ENCODE measurements at regions of chr6 and their contacts with region 1.

Region 1: DNA sequence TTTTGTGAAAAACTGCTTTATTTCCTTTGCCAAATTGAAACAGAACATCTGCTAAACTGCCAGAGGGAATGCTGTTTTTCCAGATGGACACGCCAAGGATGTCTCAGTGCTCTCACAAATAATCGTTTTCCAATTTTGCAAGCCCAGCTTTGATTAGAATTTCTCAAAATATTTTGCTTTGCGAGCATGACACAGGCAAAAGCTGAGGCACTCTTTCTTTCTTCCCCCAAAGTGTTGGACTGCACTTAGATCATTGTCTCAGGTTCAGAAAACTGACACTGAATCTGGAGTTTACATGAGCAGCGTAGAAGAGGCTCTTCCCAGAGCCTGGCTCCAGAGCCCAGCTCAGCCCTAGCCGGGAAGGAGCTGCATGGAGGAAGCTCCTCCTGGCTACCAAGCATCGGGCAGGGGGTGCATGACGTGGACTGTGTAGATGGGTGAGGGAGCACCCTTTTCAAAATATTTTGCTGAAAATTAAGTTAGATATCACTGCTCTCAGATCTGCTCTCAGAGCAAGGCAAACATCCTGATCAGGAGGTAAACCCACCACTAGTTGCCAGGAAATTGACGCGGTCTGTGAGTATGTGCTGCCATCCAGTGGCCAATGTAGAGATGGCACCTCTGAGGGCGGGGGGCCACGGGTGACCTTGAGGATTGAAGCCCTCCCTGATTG is 107.5 kb downstream of the SLC22A3 start:
- DNase-seq: peak; percentile 70
- ATAC-seq: peak; percentile 84

Region 2: DNA sequence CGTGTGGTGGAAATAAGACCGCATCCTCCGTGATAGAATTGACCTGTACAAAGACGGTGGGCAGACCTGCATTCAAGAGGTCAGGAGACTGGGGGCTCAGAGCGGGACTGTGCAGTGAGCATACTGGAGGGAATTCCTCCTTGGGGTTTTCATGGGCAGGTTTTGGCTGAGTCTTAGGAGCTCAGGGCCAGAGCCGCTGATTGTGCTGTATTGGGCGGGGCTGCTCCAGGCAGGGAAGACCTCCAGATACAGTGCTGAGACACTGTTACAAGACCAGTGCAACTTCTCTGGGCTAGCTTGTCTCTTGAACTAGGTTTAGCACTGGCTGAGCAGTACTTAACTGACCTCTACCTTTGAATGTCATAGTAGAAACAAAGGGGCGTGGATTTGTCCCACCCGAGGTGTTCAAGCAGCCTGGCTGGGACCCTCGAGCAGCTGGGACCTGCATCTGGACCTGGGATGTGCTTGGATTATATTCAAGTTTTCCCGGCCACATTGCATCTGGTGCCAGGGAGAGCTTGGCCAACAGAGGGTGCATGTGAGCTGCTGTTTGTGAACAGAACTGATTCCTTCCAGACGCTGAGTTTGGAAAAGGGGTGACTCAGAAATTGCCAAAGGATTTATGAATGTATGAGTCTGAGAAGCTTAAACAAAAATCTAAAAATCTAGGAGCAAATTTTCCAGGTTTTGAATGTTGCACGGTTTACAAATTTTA is 367.5 kb before region 1 on chr6:
- intact Hi-C with region 1: loop called (anchors 2 kb)
- DNase-seq: no peak
- ATAC-seq: peak; percentile 81

Region 3: DNA sequence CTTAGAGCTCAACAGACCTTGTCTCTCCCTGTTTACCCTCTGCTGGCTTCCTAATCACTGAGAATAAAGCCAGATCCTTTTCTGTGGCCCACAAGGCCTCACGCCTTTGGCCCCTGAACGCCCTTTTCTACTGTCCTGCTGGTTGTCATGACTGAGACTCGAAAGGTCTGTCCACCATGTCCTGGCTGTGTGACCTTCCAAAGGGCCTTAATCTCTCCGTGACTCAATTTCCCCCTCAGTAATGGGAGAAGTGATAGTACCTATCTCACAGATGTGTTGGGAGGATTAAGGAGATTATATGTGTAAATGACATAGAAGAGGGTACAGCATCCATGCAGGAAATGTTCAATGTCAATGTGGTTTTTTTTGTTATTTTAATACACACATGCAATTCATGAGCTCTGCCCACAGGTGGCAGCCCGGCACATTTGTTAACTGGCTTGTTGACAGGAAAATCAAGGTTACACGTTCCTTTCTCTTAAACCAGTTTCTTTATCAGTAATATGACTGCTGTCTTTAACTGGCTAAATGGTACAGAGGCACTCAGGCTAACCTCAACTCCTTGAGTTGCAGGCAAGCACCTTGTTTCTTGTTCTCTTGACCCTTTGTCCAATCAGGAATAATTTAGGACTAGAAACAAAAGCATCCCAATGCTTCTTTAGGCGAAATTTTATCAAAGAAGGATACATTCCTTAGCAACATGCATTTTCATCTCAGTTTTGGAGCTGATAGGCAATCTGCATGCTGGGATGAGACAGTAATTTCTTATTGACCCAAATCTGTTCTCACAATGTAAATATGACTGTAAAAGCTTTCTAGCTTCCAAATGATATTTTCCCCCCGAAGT is 317.5 kb before region 1 on chr6:
- intact Hi-C with region 1: loop called (anchors 1 kb)
- DNase-seq: no peak
- ATAC-seq: peak; percentile 68

Measured in Right ventricle myocardium inferior (tissue), 1 donor.